Activated CD8-positive, alpha-beta T cell treated with anti-CD3 and anti-CD28 coated beads, Interleukin-2, amount 10 ng/mL, durations not matched to agents 7 days and 5 days (primary cell): ENCODE measurements at regions of chr16 and their contacts with region 1.

Region 1: DNA sequence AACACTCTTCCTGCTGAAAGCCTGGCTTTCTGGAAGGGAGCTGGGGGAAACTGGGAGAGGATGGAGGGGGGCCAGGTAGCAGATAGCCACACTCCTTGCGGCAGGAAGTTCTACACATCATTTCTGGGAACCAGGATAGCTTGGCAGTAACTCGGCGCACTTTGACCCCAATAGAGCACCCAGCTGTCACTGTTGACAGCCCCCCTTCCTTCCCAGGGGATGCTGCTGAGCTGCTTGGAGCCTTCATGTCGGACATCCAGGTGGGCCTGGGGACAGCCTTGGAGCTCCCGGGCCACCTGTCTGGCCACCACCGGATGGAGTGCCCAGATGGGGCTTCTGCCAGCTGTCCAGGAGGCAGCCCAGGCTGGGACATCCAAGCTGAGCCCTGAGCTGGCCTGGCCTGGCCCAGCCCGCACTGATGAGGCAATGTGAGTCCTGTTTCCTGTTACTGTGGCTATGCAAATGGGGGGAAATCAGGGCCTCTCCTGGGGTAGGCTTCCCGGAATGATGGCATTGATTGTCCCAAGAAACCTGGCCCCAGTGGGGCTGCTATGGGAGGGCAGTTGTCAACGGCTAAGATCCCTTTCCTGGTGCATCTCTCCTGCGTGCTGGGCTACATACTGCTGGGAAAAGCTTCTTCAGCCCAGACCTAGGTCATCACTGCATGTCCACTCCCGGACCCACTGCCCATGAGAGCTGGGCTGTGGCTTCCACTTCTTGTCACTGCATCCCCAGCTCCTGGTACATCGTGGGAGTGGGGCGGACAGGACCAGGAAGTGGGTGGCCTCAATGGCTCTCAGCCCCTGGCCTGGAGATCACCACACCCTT is 50.0 kb downstream of the SOCS1 start:
- DNase-seq: no peak
- ATAC-seq: peak; percentile 31
- H3K4me3 Mint-ChIP-seq: no peak overlapping the region
- H3K27ac Mint-ChIP-seq: peak overlapping the region; percentile 83
- H3K4me1 Mint-ChIP-seq: peaks cover 65% of the 10 kb centered on the region
- H3K27me3 Mint-ChIP-seq: no peaks in the 10 kb centered on the region

Region 2: DNA sequence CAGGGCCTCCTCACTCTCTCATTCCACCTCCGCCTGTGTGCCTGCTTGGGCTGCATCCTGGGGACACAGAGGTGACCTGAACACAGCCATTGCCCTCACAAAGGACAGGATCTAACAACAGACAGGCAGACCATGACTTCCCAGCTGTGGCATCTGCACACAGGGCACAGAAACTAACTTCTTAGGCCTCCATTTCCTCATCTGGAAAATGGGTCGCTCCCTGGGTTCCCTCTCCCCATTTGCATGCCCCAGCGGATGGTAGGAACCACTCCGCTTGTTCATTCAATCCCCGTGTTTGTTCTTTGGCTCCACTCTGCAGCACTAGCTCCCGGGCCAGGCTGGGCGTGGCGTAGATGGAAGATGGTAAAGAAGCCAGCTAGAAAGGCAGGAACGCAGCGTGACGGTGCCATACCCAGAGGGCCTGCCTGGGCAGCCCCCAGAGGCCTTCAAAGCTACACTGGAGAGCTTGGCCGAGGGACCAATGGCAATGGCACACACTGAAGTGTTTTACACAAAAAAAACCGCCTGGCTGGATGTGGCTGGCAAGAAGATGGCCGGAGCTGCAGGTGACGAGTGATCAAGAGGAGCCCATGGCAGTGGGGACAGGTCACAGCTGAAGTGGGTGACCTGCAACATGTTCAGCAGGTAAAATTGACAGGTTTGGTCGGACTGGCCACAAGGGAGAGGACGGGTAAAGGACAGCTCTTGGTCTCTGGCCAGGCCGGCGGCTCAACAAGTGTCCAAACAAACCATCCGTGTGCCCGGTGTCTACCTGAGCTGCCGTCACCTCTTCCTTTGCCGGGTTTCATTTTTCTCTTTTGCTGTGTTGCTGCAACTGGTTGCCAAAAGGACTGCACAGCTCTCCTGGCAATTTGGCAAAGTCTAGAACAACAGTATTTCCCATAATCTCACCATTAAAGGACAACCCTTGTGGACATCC is 16.9 kb before region 1 on chr16:
- CTCF ChIA-PET with region 1: no interaction called
- POLR2A ChIA-PET with region 1: no interaction called
- DNase-seq: no peak
- ATAC-seq: no peak
- H3K4me3 Mint-ChIP-seq: no peak overlapping the region
- H3K27ac Mint-ChIP-seq: peak overlapping the region; percentile 18
- H3K4me1 Mint-ChIP-seq: peaks cover 44% of the 10 kb centered on the region
- H3K27me3 Mint-ChIP-seq: no peaks in the 10 kb centered on the region

Region 3: GRCh38 chr16:11218604-11218962 is 12.6 kb after region 1 on chr16:
- CTCF ChIA-PET with region 1: interaction called, 28 read pairs
- POLR2A ChIA-PET with region 1: interaction called, 4 read pairs
- DNase-seq: no peak
- ATAC-seq: no peak
- H3K4me3 Mint-ChIP-seq: no peak overlapping the region
- H3K27ac Mint-ChIP-seq: peak overlapping the region; percentile 75
- H3K4me1 Mint-ChIP-seq: peaks cover 57% of the 10 kb centered on the region
- H3K27me3 Mint-ChIP-seq: no peaks in the 10 kb centered on the region

Region 4: GRCh38 chr16:11273721-11274324 is 67.9 kb after region 1 on chr16:
- CTCF ChIA-PET with region 1: no interaction called
- POLR2A ChIA-PET with region 1: no interaction called
- DNase-seq: no peak
- ATAC-seq: no peak
- H3K4me3 Mint-ChIP-seq: no peak overlapping the region
- H3K27ac Mint-ChIP-seq: no peak overlapping the region
- H3K4me1 Mint-ChIP-seq: peaks cover under 1% of the 10 kb centered on the region
- H3K27me3 Mint-ChIP-seq: no peaks in the 10 kb centered on the region